Cardiac septum (tissue), 1 donor: ENCODE measurements at regions of chr10 and their contacts with region 1.

Region 1: DNA sequence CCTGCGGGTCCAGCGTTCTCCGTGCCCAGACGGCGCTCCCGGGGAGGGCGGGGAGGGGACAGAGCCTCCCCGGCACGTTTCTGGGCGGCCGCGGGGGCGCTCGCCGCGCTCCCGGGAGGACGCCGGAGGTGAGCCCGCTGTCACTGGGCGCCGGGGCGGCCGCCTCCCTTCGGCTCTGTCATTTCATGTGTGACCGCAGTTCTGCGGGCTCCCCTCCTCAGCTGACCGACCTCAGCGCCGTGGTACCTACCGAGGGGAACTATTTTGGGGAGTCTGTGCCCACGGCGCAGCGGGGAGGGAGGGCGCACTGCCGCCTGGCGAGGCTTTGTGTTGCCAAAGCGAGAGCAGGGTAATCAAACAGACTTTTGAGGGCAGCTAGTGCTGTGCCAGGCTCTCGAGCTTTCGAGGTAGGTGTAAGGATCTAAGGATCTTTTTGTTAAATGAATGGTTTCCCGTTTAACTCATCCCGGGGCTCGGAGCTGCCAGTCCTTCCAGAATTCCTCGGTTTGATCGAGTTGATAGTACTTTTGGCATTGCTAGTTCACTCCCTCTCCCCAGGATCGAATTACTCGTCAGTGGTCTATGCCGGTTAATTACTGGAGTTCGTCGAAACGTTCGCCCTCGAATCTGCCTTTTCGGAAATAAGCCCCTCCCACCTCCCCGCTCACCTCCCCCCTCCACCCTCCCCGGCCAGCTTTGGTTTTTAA is 1.9 kb downstream of the ARID5B start:
- DNase-seq: peak; percentile 83

Region 2: DNA sequence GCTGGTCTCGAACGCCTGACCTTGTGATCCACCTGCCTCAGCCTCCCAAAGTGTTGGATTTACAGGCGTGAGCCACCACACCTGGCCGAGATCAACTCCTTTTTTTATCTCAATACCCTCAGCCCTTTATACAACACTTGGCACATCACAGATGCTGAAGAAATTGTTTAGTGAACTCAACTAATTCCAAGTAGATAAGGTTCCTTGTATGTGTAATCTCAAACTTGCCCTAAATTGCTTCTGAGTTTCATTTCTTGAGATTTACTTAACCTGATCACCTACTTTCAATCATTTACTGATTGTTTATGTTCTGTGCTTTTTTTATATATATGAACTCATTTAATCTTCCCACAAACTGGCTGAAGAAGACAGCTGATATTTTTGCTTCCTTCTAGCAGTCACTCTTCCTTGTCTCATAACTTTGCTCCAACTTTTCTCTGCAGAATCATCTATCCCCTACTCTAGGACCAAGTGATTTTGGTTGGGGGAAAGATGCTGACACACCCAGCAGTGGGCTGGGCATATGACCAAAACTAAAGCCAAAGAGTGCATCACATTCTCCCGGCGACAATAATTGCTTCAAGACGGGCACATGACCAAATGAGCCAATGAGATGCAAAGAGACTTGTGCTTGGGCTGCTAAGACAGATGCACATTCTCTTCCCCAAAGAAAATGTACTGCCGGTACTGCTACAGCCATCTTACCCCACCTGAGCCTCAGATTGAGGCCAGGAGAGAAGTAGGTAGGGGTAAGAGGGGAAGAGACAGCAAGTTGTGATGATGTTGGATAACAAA is 42.2 kb before region 1 on chr10:
- intact Hi-C with region 1: no loop called
- DNase-seq: no peak

Region 3: GRCh38 chr10:61943674-61944410 is 40.5 kb after region 1 on chr10:
- intact Hi-C with region 1: loop called (anchors 5 kb)
- DNase-seq: no peak

Region 4: GRCh38 chr10:61992671-61993668 is 89.6 kb after region 1 on chr10:
- intact Hi-C with region 1: loop called (anchors 5 kb)
- DNase-seq: no peak

Region 5: DNA sequence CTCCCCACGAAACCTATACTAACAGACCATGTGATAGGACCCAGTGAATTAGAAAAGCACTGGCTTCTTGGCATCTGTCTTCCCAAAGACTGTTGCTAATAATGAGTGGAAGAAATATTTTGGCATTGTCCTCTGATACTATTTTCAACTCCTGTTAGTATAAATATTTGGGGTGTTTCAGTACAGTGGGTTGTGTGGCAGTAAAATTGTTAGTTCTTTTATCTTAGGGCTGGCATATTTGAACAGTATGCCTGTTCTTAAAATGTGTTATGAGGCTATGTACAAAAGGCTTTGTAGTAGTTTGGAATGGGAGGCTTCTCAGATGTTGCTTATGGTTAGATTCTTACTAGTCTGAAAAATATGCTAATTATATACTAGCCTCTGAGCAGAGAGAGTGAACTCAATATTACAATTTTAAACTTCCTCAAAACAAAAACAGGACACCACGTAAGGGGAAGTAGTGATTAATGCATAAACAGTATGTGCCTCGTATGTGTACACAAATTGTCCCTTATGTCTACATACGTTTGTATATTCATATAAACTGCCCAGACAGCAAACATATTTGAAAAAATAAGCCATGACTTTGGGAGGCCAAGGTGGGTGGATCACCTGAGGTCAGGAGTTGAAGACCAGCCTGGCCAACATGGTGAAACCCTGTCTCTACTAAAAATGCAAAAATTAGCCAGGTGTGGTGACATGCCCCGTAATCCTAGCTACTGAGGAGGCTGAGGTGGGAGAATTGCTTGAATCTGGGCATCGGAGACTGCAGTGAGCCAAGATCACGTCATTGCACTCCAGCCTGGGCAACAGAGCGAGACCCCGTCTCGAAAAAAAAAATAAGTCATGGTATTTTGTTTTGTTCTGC is 113.5 kb after region 1 on chr10:
- intact Hi-C with region 1: loop called (anchors 5 kb)
- DNase-seq: no peak

Region 6: GRCh38 chr10:62027841-62028501 is 124.6 kb after region 1 on chr10:
- intact Hi-C with region 1: no loop called
- DNase-seq: no peak

Region 7: DNA sequence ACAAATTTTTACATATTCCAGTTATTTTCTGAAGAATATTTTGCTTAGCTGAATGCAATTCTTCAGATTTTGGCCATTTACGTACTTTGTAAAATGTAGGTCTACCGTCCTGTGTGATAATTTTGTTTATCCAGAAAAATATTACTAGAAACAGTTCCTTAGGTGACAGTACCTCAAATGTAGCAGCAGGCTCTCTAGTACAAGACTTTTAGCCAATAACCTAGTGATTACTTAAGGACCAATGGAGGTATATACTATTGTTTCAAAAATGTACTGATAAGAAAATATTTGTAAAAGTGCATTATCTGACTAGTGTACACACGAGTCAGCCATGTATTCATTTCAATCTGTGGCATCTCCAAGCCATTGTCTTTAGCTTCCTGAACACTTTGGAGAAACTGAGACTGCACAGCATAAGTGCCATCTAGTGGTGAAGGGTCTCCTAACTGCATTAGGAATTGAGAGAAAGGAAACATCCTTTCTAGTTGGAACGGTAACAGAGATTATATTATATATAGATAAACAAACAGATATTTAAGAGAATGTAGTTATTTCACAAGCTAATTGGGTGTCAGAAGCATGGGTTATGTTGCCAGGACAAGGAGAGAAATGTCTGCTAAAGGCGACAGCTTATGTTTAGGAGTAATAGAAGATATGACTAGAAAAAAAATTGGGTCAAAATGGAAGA is 341.6 kb after region 1 on chr10:
- intact Hi-C with region 1: loop called (anchors 5 kb)
- DNase-seq: no peak